Endothelial cell of umbilical vein (primary cell): ENCODE measurements at regions of chr19 and their contacts with region 1.

Region 1: GRCh38 chr19:19531951-19532805 is 3.5 kb downstream of the YJEFN3 start:
- DNase-seq: peak; percentile 44
- H3K4me3 ChIP-seq: no peak overlapping the region
- H3K27ac ChIP-seq: no peak overlapping the region
- H3K4me1 ChIP-seq: no peaks in the 10 kb centered on the region
- H3K27me3 ChIP-seq: no peaks in the 10 kb centered on the region
- CTCF ChIP-seq: peak; percentile 96 to 99
- POLR2A ChIP-seq: no peak

Region 2: GRCh38 chr19:19546751-19547176 is 14.6 kb after region 1 on chr19:
- CTCF ChIA-PET with region 1: interaction called, 44 read pairs
- POLR2A ChIA-PET with region 1: no interaction called
- dilution Hi-C with region 1: no loop called
- intact Hi-C with region 1: no loop called
- DNase-seq: no peak
- H3K4me3 ChIP-seq: no peak overlapping the region
- H3K27ac ChIP-seq: no peak overlapping the region
- H3K4me1 ChIP-seq: no peaks in the 10 kb centered on the region
- H3K27me3 ChIP-seq: no peaks in the 10 kb centered on the region
- CTCF ChIP-seq: no peak
- POLR2A ChIP-seq: no peak

Region 3: GRCh38 chr19:19643158-19644053 is 111.2 kb after region 1 on chr19 and contains the start of gene GMIP:
- CTCF ChIA-PET with region 1: interaction called, 29 read pairs
- POLR2A ChIA-PET with region 1: no interaction called
- dilution Hi-C with region 1: no loop called
- intact Hi-C with region 1: loop called (anchors 1 kb)
- DNase-seq: peak; percentile 45
- H3K4me3 ChIP-seq: peak within 1 kb of the TSS; percentile 72 to 98 (median 78)
- H3K27ac ChIP-seq: peak within 1 kb of the TSS; percentile 54
- H3K4me1 ChIP-seq: peaks cover 4% of the 10 kb centered on the region
- H3K27me3 ChIP-seq: no peaks in the 10 kb centered on the region
- CTCF ChIP-seq: peak; percentile 81 to 87
- POLR2A ChIP-seq: peak; percentile 55
- total RNA-seq, gene GMIP: 19.8 and 26.0 TPM in 2 replicates

Region 4: DNA sequence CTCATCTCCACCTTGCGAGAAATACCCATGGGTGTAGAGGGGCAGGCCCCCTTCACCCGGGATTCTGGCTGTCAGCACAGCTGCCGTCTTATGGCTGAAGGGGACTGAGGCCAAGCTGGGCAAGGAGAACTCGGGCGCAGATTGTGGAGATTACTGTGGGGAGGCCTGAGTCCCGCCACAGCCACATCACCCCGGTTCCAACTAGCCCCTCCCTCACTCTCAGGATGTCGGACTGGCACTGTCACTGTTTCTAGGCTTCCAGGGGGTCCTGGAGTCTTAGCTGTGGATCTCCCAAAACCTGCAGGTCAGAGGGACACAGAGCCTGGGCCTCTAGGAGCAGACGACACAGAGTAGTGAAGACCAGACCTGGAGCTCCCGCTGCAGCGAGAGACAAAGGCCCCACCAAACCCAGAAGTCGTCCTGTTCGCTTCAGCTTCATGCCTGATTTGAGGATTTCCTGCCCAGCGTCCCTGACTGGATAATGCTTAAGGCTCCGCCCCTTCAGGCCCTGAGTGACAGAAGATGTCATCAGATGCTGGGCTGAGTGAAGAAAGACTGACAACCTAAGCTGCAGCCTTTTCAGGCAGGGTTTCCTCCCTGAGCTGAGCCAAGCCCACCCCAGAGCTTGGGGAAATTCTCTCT is 424.4 kb after region 1 on chr19:
- CTCF ChIA-PET with region 1: interaction called, 10 read pairs
- POLR2A ChIA-PET with region 1: no interaction called
- dilution Hi-C with region 1: no loop called
- intact Hi-C with region 1: no loop called
- DNase-seq: no peak
- H3K4me3 ChIP-seq: no peak overlapping the region
- H3K27ac ChIP-seq: no peak overlapping the region
- H3K4me1 ChIP-seq: no peaks in the 10 kb centered on the region
- H3K27me3 ChIP-seq: no peaks in the 10 kb centered on the region
- CTCF ChIP-seq: no peak
- POLR2A ChIP-seq: no peak